ENCODE measurements at regions of chr1 and their contacts with region 1.

Region 1: DNA sequence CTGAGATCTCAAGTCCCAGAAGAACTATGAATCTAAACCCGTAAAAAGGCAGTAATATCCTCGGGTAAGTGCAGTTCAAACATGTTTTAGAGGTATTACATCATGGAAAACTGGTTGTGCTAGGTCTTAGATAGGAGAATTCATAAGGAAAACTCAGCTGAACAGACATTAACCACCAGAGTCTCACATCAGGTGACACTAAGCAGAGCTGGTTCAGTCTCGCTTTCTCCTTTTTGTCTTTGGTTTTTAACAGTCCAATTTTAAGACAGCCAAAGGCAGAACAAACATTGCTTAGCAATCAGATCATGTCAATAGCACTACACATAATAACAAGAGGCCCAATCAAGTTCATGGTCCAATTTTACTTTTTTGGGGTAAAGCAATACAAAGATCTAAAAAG is 63.1 kb upstream of the MUTYH start:
- DNase-seq: no peak
- ATAC-seq: no peak
- H3K4me3 ChIP-seq: no peak overlapping the region
- H3K27ac ChIP-seq: no peak overlapping the region
- H3K4me1 ChIP-seq: no peaks in the 10 kb centered on the region
- H3K27me3 ChIP-seq: no peaks in the 10 kb centered on the region
- CTCF ChIP-seq: no peak

Region 2: DNA sequence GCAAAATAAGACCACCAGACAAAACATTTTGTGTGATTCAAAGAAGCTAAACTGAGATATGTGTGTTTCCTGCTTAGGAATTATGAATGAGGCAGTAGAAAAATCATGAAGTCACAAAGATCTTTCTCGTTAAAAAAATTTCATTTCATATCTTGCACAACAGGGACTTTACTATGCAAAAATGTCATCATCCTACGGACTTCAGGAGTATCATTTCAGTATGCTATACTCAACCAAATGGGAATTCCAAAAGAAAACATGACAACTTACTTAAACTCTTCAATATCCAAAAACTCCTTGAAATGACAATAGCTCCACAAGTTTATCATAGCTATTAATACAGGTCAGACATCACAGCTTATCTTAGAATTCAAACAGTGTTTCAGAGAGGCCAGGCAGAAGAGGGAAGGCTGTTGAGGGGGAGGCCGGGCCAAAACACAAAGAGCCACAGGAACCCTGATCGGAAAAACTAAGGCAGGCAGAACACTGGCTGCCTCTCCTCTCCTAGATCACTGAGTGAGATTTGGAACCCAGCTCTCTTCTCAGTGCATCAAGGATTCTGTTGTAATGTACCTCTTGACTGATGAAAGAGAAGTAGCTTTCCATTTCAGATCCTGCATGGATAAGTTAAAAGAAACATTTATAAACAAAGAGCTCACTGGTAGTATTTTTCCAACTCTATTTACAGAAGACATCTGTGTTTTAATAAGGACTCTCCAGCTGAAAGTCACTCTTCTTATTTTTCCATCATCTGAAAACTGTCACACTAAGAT is 20.8 kb after region 1 on chr1:
- CTCF ChIA-PET with region 1: no interaction called
- POLR2A ChIA-PET with region 1: no interaction called
- in situ Hi-C with region 1: no loop called
- intact Hi-C with region 1: loop called (anchors 1 kb)
- DNase-seq: no peak
- ATAC-seq: no peak
- H3K4me3 ChIP-seq: no peak overlapping the region
- H3K27ac ChIP-seq: no peak overlapping the region
- H3K4me1 ChIP-seq: no peaks in the 10 kb centered on the region
- H3K27me3 ChIP-seq: no peaks in the 10 kb centered on the region
- CTCF ChIP-seq: no peak

Region 3: GRCh38 chr1:45455162-45455561 is 51.9 kb after region 1 on chr1:
- CTCF ChIA-PET with region 1: no interaction called
- POLR2A ChIA-PET with region 1: no interaction called
- in situ Hi-C with region 1: no loop called
- intact Hi-C with region 1: loop called (anchors 10 kb)
- DNase-seq: no peak
- ATAC-seq: no peak
- H3K4me3 ChIP-seq: no peak overlapping the region
- H3K27ac ChIP-seq: no peak overlapping the region
- H3K4me1 ChIP-seq: no peaks in the 10 kb centered on the region
- H3K27me3 ChIP-seq: no peaks in the 10 kb centered on the region
- CTCF ChIP-seq: no peak